MCF 10A (cell line): ENCODE measurements at regions of chr12 and their contacts with region 1.

Region 1: DNA sequence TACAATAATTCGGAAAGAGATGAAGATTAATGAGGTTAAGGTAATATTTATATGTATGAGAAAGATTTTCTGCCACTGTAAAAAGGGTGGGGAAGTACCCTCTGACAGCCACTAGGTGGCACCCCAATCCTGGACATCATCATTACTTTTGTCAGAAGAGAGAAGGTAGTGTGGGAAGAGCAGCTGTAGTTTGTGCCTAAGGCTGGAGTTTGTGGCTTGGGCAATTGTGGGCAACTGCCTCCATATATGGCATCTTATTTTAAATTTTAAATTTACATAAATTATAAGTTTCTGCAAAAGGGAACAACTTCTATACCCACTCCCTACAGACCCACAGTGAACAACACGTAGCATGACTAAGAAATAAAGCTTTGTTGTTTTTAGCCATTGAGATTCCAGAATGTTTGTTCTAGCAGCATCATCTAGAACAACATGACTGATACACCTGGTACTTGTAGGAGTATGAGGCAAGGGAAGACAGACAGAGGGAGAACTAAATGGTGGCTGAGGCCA is 34.4 kb upstream of the SYCP3 start:
- DNase-seq: peak; percentile 76
- H3K4me3 Mint-ChIP-seq: no peak overlapping the region
- H3K27ac Mint-ChIP-seq: peak overlapping the region; percentile 55
- H3K4me1 Mint-ChIP-seq: no peaks in the 10 kb centered on the region
- H3K27me3 Mint-ChIP-seq: no peaks in the 10 kb centered on the region
- CTCF ChIP-seq: peak; percentile 94

Region 2: GRCh38 chr12:101414533-101415119 is 359.1 kb before region 1 on chr12:
- CTCF ChIA-PET with region 1: interaction called, 3 read pairs
- POLR2A ChIA-PET with region 1: no interaction called
- intact Hi-C with region 1: loop called (anchors 5 kb)
- DNase-seq: peak; percentile 77
- H3K4me3 Mint-ChIP-seq: no peak overlapping the region
- H3K27ac Mint-ChIP-seq: no peak overlapping the region
- H3K4me1 Mint-ChIP-seq: no peaks in the 10 kb centered on the region
- H3K27me3 Mint-ChIP-seq: no peaks in the 10 kb centered on the region
- CTCF ChIP-seq: peak; percentile 46

Region 3: GRCh38 chr12:101806265-101806664 is 32.6 kb after region 1 on chr12:
- CTCF ChIA-PET with region 1: interaction called, 10 read pairs
- POLR2A ChIA-PET with region 1: no interaction called
- intact Hi-C with region 1: no loop called
- DNase-seq: no peak
- H3K4me3 Mint-ChIP-seq: no peak overlapping the region
- H3K27ac Mint-ChIP-seq: no peak overlapping the region
- H3K4me1 Mint-ChIP-seq: no peaks in the 10 kb centered on the region
- H3K27me3 Mint-ChIP-seq: no peaks in the 10 kb centered on the region
- CTCF ChIP-seq: no peak

Region 4: DNA sequence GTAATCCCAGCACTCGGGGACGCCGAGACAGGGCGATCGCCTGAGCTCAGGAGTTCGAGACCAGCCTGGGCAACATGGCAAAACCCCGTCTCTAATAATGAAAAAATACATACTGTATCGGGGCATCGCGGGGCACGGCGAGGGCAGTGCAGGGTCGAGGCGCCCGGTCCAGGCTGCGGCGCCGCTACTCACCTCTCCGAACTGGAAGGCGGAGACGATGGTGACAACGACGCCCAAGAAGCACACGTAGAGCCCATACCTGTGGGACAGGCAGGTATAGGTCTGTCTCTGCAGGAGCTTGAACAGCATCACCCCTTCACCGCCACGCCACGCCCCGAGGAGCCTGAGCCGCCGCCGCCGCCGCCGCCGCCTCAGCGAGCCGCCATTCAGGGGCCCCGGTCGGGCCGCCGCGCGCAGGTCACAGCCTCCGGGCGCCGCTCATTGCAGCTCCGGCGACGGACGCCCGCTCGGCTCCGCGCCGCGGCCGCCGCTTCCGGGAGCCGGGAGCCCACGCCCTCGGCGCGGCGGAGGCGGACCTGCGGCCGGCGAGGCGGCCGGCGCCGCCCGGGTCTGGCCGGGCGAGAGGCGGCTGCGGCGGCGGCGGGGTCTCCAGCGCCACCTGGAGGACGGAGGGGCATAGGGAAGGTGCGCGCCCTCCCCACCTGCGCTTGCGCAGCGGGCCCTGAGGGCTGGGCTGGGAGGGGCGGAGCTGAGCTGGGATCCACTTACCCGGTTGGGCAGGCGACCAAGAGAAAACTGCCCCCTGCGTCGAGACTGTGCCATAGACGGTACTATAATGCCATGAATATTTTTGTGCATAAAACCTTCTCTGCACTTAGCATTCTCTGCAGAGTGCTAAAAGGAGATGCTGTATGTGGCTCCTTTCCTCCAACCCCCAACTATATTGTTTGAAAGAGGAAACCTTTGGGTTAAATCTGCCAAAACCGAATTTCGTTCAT is 56.9 kb after region 1 on chr12 and contains the start of gene GNPTAB:
- CTCF ChIA-PET with region 1: interaction called, 71 read pairs
- POLR2A ChIA-PET with region 1: interaction called, 6 read pairs
- intact Hi-C with region 1: loop called (anchors 1 kb)
- DNase-seq: peak; percentile 94
- H3K4me3 Mint-ChIP-seq: peak within 1 kb of the TSS; percentile 84
- H3K27ac Mint-ChIP-seq: peak within 1 kb of the TSS; percentile 70
- H3K4me1 Mint-ChIP-seq: peaks cover 11% of the 10 kb centered on the region
- H3K27me3 Mint-ChIP-seq: no peaks in the 10 kb centered on the region
- CTCF ChIP-seq: peak; percentile 65
- total RNA-seq, gene GNPTAB: 11.5 and 14.8 TPM in 2 replicates

Region 5: GRCh38 chr12:101919447-101919846 is 145.7 kb after region 1 on chr12:
- CTCF ChIA-PET with region 1: interaction called, 10 read pairs
- POLR2A ChIA-PET with region 1: no interaction called
- intact Hi-C with region 1: no loop called
- DNase-seq: no peak
- H3K4me3 Mint-ChIP-seq: no peak overlapping the region
- H3K27ac Mint-ChIP-seq: no peak overlapping the region
- H3K4me1 Mint-ChIP-seq: peaks cover 17% of the 10 kb centered on the region
- H3K27me3 Mint-ChIP-seq: no peaks in the 10 kb centered on the region
- CTCF ChIP-seq: no peak

Region 6: DNA sequence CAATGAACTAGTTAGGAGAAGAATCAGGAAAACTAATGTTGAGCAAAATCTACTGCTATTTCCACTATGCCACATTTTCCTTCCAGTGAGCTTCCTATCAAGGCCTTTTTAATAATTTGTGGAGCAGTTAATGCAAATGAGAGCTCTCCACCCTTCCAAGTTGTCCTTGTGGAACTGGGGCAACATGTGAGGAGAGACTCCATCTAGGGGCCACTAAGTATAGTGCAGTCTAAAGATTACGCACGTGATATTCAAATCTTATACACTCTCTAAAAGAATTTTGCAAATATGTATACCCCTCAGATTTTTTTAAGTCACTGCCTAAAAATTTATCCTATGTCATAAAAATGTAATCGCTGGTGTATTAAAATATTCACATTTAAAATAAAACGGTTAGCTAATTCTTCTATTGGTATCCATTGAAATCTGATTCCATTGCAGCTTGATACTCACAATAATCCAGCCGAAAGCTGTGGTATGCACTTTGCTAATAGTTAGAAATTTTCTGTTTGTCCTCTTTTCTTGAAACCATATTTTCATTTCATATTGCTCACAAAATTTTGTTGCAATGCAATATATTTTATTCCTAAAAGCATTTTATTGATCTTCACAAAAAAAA is 1043.2 kb after region 1 on chr12:
- CTCF ChIA-PET with region 1: interaction called, 4 read pairs
- POLR2A ChIA-PET with region 1: no interaction called
- intact Hi-C with region 1: loop called (anchors 10 kb)
- DNase-seq: peak; percentile 48
- H3K4me3 Mint-ChIP-seq: no peak overlapping the region
- H3K27ac Mint-ChIP-seq: no peak overlapping the region
- H3K4me1 Mint-ChIP-seq: peaks cover 9% of the 10 kb centered on the region
- H3K27me3 Mint-ChIP-seq: peaks cover 26% of the 10 kb centered on the region
- CTCF ChIP-seq: peak; percentile 58